ENCODE measurements at regions of chr20 and their contacts with region 1.

Region 1: GRCh38 chr20:3820048-3820900 is at the start of gene AP5S1:
- DNase-seq: peak; percentile 95
- ATAC-seq: peak; percentile 88
- H3K4me3 Mint-ChIP-seq: peak within 1 kb of the TSS; percentile 92
- H3K27ac Mint-ChIP-seq: peak within 1 kb of the TSS; percentile 97
- H3K4me1 Mint-ChIP-seq: peaks cover 20% of the 10 kb centered on the region
- H3K27me3 Mint-ChIP-seq: no peaks in the 10 kb centered on the region
- CTCF ChIP-seq: peak; percentile 96
- total RNA-seq, gene AP5S1: 13.4 and 13.5 TPM in 2 replicates

Region 2: GRCh38 chr20:3461211-3461771 is 359.0 kb before region 1 on chr20:
- CTCF ChIA-PET with region 1: no interaction called
- POLR2A ChIA-PET with region 1: no interaction called
- intact Hi-C with region 1: no loop called
- DNase-seq: no peak
- ATAC-seq: no peak
- H3K4me3 Mint-ChIP-seq: no peak overlapping the region
- H3K27ac Mint-ChIP-seq: no peak overlapping the region
- H3K4me1 Mint-ChIP-seq: no peaks in the 10 kb centered on the region
- H3K27me3 Mint-ChIP-seq: peaks cover 8% of the 10 kb centered on the region
- CTCF ChIP-seq: no peak

Region 3: GRCh38 chr20:3679749-3680700 is 140.2 kb before region 1 on chr20:
- CTCF ChIA-PET with region 1: interaction called, 8 read pairs
- POLR2A ChIA-PET with region 1: no interaction called
- intact Hi-C with region 1: loop called (anchors 1 kb)
- DNase-seq: no peak
- ATAC-seq: no peak
- H3K4me3 Mint-ChIP-seq: no peak overlapping the region
- H3K27ac Mint-ChIP-seq: no peak overlapping the region
- H3K4me1 Mint-ChIP-seq: peaks cover 7% of the 10 kb centered on the region
- H3K27me3 Mint-ChIP-seq: peaks cover 40% of the 10 kb centered on the region
- CTCF ChIP-seq: no peak

Region 4: DNA sequence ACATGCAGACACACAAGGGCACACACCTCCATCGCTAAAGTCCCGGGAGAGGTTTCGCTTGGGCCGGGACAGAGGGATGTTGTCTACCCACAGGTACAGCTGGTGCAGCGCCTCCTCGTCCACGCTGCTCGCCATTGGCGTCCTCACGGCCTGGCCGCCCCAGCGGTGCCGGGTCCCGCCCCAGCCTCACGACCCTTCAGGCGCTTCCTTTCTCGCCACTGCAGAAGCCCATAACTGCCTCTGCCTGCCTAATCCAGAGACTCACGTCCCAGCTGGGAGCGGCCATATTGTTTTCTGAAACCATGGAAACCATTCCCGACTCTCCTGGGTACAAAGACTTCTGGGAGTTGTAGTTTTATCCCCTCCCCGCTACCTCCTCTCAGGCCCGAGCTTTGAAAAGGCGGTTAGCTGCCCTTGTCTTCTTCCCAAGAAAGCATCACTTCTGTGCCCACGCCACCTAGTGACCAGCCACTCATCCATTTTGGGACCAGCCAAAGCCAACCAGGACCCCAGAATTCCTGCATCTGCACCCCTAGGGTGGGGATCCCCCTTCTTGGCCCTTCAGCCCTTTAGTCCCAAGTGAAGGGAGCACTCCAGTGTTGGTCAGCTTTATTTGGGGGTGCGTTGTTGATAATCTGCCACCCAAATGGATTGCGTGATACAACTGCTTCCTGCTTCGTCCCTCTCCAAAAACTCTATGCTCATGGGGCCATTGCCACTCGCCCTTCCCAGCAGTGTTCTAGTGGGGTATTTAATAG is 38.9 kb before region 1 on chr20 and contains the start of gene SPEF1:
- CTCF ChIA-PET with region 1: interaction called, 33 read pairs
- POLR2A ChIA-PET with region 1: interaction called, 65 read pairs
- intact Hi-C with region 1: loop called (anchors 1 kb)
- DNase-seq: no peak
- ATAC-seq: peak; percentile 67
- H3K4me3 Mint-ChIP-seq: peak within 1 kb of the TSS; percentile 79
- H3K27ac Mint-ChIP-seq: peak within 1 kb of the TSS; percentile 74
- H3K4me1 Mint-ChIP-seq: peaks cover 49% of the 10 kb centered on the region
- H3K27me3 Mint-ChIP-seq: peaks cover 2% of the 10 kb centered on the region
- CTCF ChIP-seq: no peak
- total RNA-seq, gene SPEF1: not detected in 2 replicates

Region 5: GRCh38 chr20:3795511-3796468 is 24.5 kb before region 1 on chr20 and contains the start of gene CDC25B:
- CTCF ChIA-PET with region 1: interaction called, 12 read pairs
- POLR2A ChIA-PET with region 1: interaction called, 26 read pairs
- intact Hi-C with region 1: loop called (anchors 1 kb)
- DNase-seq: peak; percentile 75
- ATAC-seq: peak; percentile 84
- H3K4me3 Mint-ChIP-seq: peak within 1 kb of the TSS; percentile 92
- H3K27ac Mint-ChIP-seq: peak within 1 kb of the TSS; percentile 95
- H3K4me1 Mint-ChIP-seq: peaks cover 50% of the 10 kb centered on the region
- H3K27me3 Mint-ChIP-seq: no peaks in the 10 kb centered on the region
- CTCF ChIP-seq: no peak
- total RNA-seq, gene CDC25B: 21.6 and 24.3 TPM in 2 replicates

Region 6: DNA sequence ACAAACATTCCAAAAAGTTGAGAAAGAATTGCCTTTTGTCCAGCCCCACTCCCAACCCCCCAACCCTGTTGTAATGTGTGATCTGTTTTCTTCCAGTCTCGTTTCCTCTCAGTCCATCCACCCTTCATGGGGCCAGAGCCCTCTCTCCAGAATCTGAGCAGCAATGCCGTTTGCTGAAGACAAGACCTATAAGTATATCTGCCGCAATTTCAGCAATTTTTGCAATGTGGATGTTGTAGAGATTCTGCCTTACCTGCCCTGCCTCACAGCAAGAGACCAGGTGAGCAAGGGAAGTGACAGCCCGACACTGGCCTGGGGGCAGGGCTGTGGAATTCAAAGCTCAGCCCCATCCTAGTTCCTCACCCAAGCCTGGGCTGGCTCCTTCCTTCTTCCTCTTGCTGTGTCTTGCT is 34.2 kb after region 1 on chr20:
- CTCF ChIA-PET with region 1: interaction called, 8 read pairs
- POLR2A ChIA-PET with region 1: interaction called, 11 read pairs
- intact Hi-C with region 1: loop called (anchors 2 kb)
- DNase-seq: no peak
- ATAC-seq: no peak
- H3K4me3 Mint-ChIP-seq: no peak overlapping the region
- H3K27ac Mint-ChIP-seq: no peak overlapping the region
- H3K4me1 Mint-ChIP-seq: peaks cover 5% of the 10 kb centered on the region
- H3K27me3 Mint-ChIP-seq: no peaks in the 10 kb centered on the region
- CTCF ChIP-seq: no peak

Region 7: GRCh38 chr20:4014031-4014474 is 193.8 kb after region 1 on chr20:
- CTCF ChIA-PET with region 1: no interaction called
- POLR2A ChIA-PET with region 1: no interaction called
- intact Hi-C with region 1: loop called (anchors 1 kb)
- DNase-seq: no peak
- ATAC-seq: no peak
- H3K4me3 Mint-ChIP-seq: peak overlapping the region; percentile 83
- H3K27ac Mint-ChIP-seq: no peak overlapping the region
- H3K4me1 Mint-ChIP-seq: peaks cover 33% of the 10 kb centered on the region
- H3K27me3 Mint-ChIP-seq: peaks cover 2% of the 10 kb centered on the region
- CTCF ChIP-seq: no peak

Region 8: GRCh38 chr20:4082406-4083097 is 262.3 kb after region 1 on chr20:
- CTCF ChIA-PET with region 1: interaction called, 8 read pairs
- POLR2A ChIA-PET with region 1: interaction called, 8 read pairs
- intact Hi-C with region 1: loop called (anchors 1 kb)
- DNase-seq: peak; percentile 26
- ATAC-seq: peak; percentile 62
- H3K4me3 Mint-ChIP-seq: peak overlapping the region; percentile 39
- H3K27ac Mint-ChIP-seq: peak overlapping the region; percentile 81
- H3K4me1 Mint-ChIP-seq: peaks cover 34% of the 10 kb centered on the region
- H3K27me3 Mint-ChIP-seq: peaks cover 4% of the 10 kb centered on the region
- CTCF ChIP-seq: no peak